Caco-2 (cell line): ENCODE measurements at regions of chr12 and their contacts with region 1.

Region 1: DNA sequence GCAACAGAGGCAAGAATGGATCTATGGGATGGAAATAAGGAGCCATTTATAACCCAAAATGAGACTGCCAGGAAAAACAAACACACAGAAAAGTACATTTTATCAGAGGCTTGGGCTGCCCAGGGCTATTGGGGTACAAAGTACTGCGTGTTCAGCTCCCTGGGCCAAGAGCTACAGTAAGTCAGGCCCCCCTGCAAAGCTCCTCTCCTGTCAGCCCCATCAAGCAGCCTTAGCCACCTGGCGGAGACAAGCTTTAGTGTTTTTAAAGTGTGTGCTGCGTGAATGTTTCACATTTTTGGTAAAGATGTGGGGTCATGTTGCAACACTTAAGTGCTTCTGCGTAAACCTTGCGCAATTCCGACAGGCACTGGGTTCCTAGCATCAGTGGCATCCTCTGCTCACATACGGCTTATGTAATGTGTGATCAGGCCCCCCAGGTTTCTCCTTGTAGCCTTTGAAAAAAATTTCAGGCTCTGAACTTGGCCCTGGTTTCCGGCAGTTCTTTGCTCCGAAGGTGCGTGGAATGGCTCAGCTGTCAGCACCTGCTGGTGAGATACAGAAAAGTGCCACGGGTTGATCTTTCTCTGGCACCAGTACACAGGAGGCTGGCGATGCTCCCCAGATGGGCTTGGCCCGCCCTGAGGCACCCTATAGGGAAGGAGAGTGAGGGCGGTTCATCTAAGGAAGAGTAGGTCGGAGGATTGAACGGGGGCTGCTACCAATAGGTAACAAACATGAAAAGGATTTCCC is 198.7 kb upstream of the EEA1 start:
- DNase-seq: peak; percentile 89 to 93
- H3K4me3 ChIP-seq: no peak overlapping the region
- H3K4me3 Mint-ChIP-seq: peak overlapping the region; percentile 37
- H3K27ac Mint-ChIP-seq: peak overlapping the region; percentile 94
- H3K4me1 ChIP-seq: peaks cover 36% of the 10 kb centered on the region
- H3K4me1 Mint-ChIP-seq: peaks cover 43% of the 10 kb centered on the region
- H3K27me3 ChIP-seq: no peaks in the 10 kb centered on the region
- H3K27me3 Mint-ChIP-seq: no peaks in the 10 kb centered on the region
- CTCF ChIP-seq: peak; percentile 57 to 65

Region 2: GRCh38 chr12:92953747-92954146 is 174.0 kb before region 1 on chr12:
- CTCF ChIA-PET with region 1: no interaction called
- POLR2A ChIA-PET with region 1: no interaction called
- intact Hi-C with region 1: no loop called
- DNase-seq: no peak
- H3K4me3 ChIP-seq: no peak overlapping the region
- H3K4me3 Mint-ChIP-seq: no peak overlapping the region
- H3K27ac Mint-ChIP-seq: no peak overlapping the region
- H3K4me1 ChIP-seq: peaks cover 5% of the 10 kb centered on the region
- H3K4me1 Mint-ChIP-seq: no peaks in the 10 kb centered on the region
- H3K27me3 ChIP-seq: no peaks in the 10 kb centered on the region
- H3K27me3 Mint-ChIP-seq: no peaks in the 10 kb centered on the region
- CTCF ChIP-seq: no peak

Region 3: GRCh38 chr12:93042283-93042682 is 85.5 kb before region 1 on chr12:
- CTCF ChIA-PET with region 1: interaction called, 3 read pairs
- POLR2A ChIA-PET with region 1: no interaction called
- intact Hi-C with region 1: loop called (anchors 1 kb)
- DNase-seq: peak; percentile 72 to 84
- H3K4me3 ChIP-seq: no peak overlapping the region
- H3K4me3 Mint-ChIP-seq: peak overlapping the region; percentile 37
- H3K27ac Mint-ChIP-seq: peak overlapping the region; percentile 87
- H3K4me1 ChIP-seq: peaks cover 46% of the 10 kb centered on the region
- H3K4me1 Mint-ChIP-seq: peaks cover 51% of the 10 kb centered on the region
- H3K27me3 ChIP-seq: no peaks in the 10 kb centered on the region
- H3K27me3 Mint-ChIP-seq: no peaks in the 10 kb centered on the region
- CTCF ChIP-seq: no peak

Region 4: DNA sequence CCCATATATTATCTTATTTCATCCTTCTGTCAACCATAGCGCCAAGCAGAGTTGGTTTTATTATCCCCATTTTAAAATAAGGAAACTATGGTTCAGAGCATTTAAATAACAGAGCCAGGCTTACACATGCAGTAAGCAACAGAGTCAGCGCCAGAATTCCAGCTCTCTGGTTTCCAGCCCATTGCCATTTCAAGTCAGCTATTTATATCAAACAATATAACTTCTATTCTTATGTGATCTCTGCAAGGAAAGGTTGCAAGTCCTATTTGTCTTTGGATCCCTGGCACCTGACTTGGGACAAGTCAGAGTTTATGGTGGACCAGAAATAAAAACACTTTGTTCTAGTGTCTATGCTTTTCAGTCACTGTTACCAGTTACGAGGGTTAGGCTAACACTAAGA is 24.6 kb before region 1 on chr12:
- CTCF ChIA-PET with region 1: interaction called, 4 read pairs
- POLR2A ChIA-PET with region 1: interaction called, 5 read pairs
- intact Hi-C with region 1: loop called (anchors 1 kb)
- DNase-seq: no peak
- H3K4me3 ChIP-seq: no peak overlapping the region
- H3K4me3 Mint-ChIP-seq: no peak overlapping the region
- H3K27ac Mint-ChIP-seq: peak overlapping the region; percentile 76
- H3K4me1 ChIP-seq: peaks cover 47% of the 10 kb centered on the region
- H3K4me1 Mint-ChIP-seq: peaks cover 44% of the 10 kb centered on the region
- H3K27me3 ChIP-seq: no peaks in the 10 kb centered on the region
- H3K27me3 Mint-ChIP-seq: no peaks in the 10 kb centered on the region
- CTCF ChIP-seq: no peak

Region 5: GRCh38 chr12:93191956-93192355 is 64.2 kb after region 1 on chr12:
- CTCF ChIA-PET with region 1: no interaction called
- POLR2A ChIA-PET with region 1: no interaction called
- intact Hi-C with region 1: no loop called
- DNase-seq: no peak
- H3K4me3 ChIP-seq: no peak overlapping the region
- H3K4me3 Mint-ChIP-seq: no peak overlapping the region
- H3K27ac Mint-ChIP-seq: no peak overlapping the region
- H3K4me1 ChIP-seq: peaks cover 8% of the 10 kb centered on the region
- H3K4me1 Mint-ChIP-seq: peaks cover 14% of the 10 kb centered on the region
- H3K27me3 ChIP-seq: no peaks in the 10 kb centered on the region
- H3K27me3 Mint-ChIP-seq: no peaks in the 10 kb centered on the region
- CTCF ChIP-seq: no peak